MCF 10A (cell line): ENCODE measurements at regions of chr12 and their contacts with region 1.

Region 1: GRCh38 chr12:93569656-93570551 is 2.6 kb upstream of the SOCS2 start:
- DNase-seq: peak; percentile 91
- H3K4me3 Mint-ChIP-seq: peak overlapping the region; percentile 84
- H3K27ac Mint-ChIP-seq: peak overlapping the region; percentile 42
- H3K4me1 Mint-ChIP-seq: peaks cover 15% of the 10 kb centered on the region
- H3K27me3 Mint-ChIP-seq: no peaks in the 10 kb centered on the region
- CTCF ChIP-seq: peak; percentile 94

Region 2: GRCh38 chr12:93502802-93503623 is 66.9 kb before region 1 on chr12:
- CTCF ChIA-PET with region 1: interaction called, 9 read pairs
- POLR2A ChIA-PET with region 1: interaction called, 3 read pairs
- intact Hi-C with region 1: loop called (anchors 1 kb)
- DNase-seq: peak; percentile 54
- H3K4me3 Mint-ChIP-seq: no peak overlapping the region
- H3K27ac Mint-ChIP-seq: no peak overlapping the region
- H3K4me1 Mint-ChIP-seq: no peaks in the 10 kb centered on the region
- H3K27me3 Mint-ChIP-seq: no peaks in the 10 kb centered on the region
- CTCF ChIP-seq: peak; percentile 81

Region 3: GRCh38 chr12:93624595-93625294 is 54.8 kb after region 1 on chr12:
- CTCF ChIA-PET with region 1: no interaction called
- POLR2A ChIA-PET with region 1: interaction called, 12 read pairs
- intact Hi-C with region 1: loop called (anchors 1 kb)
- DNase-seq: peak; percentile 93
- H3K4me3 Mint-ChIP-seq: peak overlapping the region; percentile 4
- H3K27ac Mint-ChIP-seq: peak overlapping the region; percentile 85
- H3K4me1 Mint-ChIP-seq: peaks cover 18% of the 10 kb centered on the region
- H3K27me3 Mint-ChIP-seq: no peaks in the 10 kb centered on the region
- CTCF ChIP-seq: no peak

Region 4: GRCh38 chr12:93663006-93663728 is 93.3 kb after region 1 on chr12:
- CTCF ChIA-PET with region 1: no interaction called
- POLR2A ChIA-PET with region 1: no interaction called
- intact Hi-C with region 1: no loop called
- DNase-seq: no peak
- H3K4me3 Mint-ChIP-seq: no peak overlapping the region
- H3K27ac Mint-ChIP-seq: no peak overlapping the region
- H3K4me1 Mint-ChIP-seq: peaks cover 10% of the 10 kb centered on the region
- H3K27me3 Mint-ChIP-seq: no peaks in the 10 kb centered on the region
- CTCF ChIP-seq: no peak

Region 5: GRCh38 chr12:93742110-93742934 is 172.4 kb after region 1 on chr12:
- CTCF ChIA-PET with region 1: interaction called, 9 read pairs
- POLR2A ChIA-PET with region 1: interaction called, 38 read pairs
- intact Hi-C with region 1: loop called (anchors 1 kb)
- DNase-seq: peak; percentile 78
- H3K4me3 Mint-ChIP-seq: peak overlapping the region; percentile 79
- H3K27ac Mint-ChIP-seq: peak overlapping the region; percentile 95
- H3K4me1 Mint-ChIP-seq: peaks cover 38% of the 10 kb centered on the region
- H3K27me3 Mint-ChIP-seq: no peaks in the 10 kb centered on the region
- CTCF ChIP-seq: peak; percentile 38

Region 6: DNA sequence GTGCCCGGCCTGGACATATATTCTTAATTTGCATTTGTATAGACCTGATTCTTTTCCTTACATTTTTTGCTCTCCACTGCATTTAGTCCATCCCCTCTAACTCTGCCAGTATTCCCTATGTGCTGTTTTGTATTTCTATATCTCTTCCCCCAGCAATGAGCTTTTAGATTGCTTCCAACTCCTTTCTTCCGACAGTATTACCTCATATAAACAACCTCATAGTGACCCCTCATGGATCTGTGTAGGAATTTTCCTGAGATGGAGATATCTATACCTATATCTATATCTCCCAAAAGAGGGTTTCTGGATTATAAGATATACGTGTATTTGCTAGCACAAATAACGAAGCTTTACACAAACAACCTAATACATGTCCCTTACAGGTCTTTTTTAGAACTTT is 269.2 kb after region 1 on chr12:
- CTCF ChIA-PET with region 1: interaction called, 4 read pairs
- POLR2A ChIA-PET with region 1: no interaction called
- intact Hi-C with region 1: loop called (anchors 1 kb)
- DNase-seq: peak; percentile 30
- H3K4me3 Mint-ChIP-seq: no peak overlapping the region
- H3K27ac Mint-ChIP-seq: no peak overlapping the region
- H3K4me1 Mint-ChIP-seq: peaks cover 16% of the 10 kb centered on the region
- H3K27me3 Mint-ChIP-seq: no peaks in the 10 kb centered on the region
- CTCF ChIP-seq: peak; percentile 19

Region 7: GRCh38 chr12:93857279-93857938 is 287.5 kb after region 1 on chr12:
- CTCF ChIA-PET with region 1: no interaction called
- POLR2A ChIA-PET with region 1: no interaction called
- intact Hi-C with region 1: no loop called
- DNase-seq: peak; percentile 33
- H3K4me3 Mint-ChIP-seq: no peak overlapping the region
- H3K27ac Mint-ChIP-seq: no peak overlapping the region
- H3K4me1 Mint-ChIP-seq: peaks cover 5% of the 10 kb centered on the region
- H3K27me3 Mint-ChIP-seq: no peaks in the 10 kb centered on the region
- CTCF ChIP-seq: no peak

Region 8: DNA sequence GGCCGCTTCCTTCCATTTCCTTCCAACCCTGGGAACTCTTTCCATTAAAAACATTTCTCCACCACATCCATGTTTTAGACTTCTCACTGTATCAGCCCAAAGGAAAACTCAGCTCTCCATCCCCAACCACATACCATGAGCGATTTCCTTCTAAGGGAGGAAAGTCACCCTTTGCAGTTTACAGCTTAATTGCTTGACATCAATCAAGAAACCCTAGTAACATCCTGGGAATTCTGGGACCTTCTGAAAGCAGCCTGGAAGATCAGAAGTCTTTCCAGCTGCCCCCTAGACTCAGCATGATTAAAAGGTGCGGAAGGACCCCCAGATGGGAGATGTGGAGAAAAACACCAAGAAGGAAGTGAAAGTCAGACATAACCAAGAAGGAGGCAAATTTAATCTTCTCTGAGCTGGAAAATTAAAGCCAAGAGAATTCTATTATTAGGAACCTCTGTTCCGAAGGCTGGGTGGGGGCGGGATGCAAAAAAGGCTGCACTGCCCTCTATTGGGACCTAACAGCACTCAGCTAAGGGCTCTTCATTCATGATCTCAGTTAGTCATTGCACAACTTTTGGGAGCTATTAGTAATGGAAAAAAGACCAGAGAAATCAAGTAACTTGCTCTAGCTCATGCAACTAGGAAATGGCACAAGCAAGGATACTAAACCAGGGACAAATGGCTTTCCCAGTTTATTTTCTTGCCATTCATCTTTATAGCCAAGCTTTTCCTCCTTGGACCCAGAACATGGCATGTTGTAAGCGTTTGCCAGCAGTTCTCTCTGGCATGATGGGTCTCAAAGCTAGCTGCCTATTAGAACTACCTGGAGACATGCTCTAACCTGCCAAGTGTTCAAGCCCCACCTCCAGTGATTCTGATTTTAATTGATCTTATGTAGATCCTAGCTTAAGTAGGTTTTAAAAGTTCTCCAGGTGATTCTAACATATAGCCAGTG is 505.4 kb after region 1 on chr12:
- CTCF ChIA-PET with region 1: interaction called, 5 read pairs
- POLR2A ChIA-PET with region 1: interaction called, 6 read pairs
- intact Hi-C with region 1: loop called (anchors 1 kb)
- DNase-seq: peak; percentile 86
- H3K4me3 Mint-ChIP-seq: no peak overlapping the region
- H3K27ac Mint-ChIP-seq: no peak overlapping the region
- H3K4me1 Mint-ChIP-seq: peaks cover 33% of the 10 kb centered on the region
- H3K27me3 Mint-ChIP-seq: no peaks in the 10 kb centered on the region
- CTCF ChIP-seq: peak; percentile 50